ENCODE measurements at regions of chr3 and their contacts with region 1.

Region 1: DNA sequence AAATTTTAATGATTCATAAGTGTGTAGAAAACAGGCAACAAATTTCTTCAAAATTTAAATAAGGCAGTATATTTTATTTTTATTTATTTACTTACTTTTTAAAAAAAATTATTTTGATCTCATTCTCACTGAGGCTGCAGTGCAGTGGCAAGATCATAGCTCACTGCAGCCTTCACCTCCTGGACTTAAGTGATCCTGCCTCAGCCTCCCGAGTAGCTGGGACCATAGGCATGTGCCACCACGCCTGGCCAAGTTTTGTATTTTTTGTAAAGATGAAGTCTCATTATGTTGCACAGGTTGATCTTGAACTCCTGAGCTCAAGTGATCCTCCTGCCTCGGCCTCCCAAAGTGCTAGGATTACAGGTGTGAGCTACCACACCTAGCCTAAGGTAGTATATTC is 61.2 kb upstream of the XRN1 start:
- DNase-seq: no peak
- H3K4me3 Mint-ChIP-seq: peak overlapping the region; percentile 65
- H3K27ac Mint-ChIP-seq: peak overlapping the region; percentile 90
- H3K4me1 Mint-ChIP-seq: peaks cover 23% of the 10 kb centered on the region
- H3K27me3 Mint-ChIP-seq: no peaks in the 10 kb centered on the region

Region 2: DNA sequence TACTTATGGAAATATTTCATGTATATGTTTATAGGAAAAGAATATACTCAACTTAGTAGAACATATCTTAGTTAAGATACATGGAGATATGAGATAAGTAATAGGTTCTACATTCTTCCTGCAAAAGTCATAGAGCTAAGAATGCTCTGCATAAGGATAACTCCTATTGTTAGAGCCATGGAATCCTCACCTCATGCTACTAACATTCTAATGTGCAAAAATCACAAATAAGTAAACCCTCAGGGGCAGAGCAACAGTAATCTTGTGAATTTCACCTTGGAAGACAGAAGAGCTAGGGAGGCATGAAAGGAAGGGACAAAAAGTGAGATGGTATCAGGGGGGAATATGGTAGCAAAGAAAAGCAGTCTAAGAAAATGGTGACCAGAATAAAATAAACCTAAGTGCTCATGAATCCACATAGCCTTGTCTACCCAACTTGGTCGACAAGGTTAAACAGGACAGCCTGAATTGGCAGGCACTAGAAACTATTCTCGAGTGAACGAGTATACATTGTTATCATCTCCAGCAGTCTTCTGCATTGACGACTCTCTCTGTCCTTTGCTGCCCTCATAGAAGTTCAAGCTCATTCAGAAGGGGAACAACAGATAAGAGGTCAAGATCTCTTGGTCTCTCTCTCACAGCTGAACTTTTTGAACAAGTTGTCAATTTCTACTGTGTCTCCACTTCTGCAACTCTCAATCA is 114.0 kb before region 1 on chr3:
- CTCF ChIA-PET with region 1: no interaction called
- intact Hi-C with region 1: no loop called
- DNase-seq: no peak
- H3K4me3 Mint-ChIP-seq: no peak overlapping the region
- H3K27ac Mint-ChIP-seq: no peak overlapping the region
- H3K4me1 Mint-ChIP-seq: no peaks in the 10 kb centered on the region
- H3K27me3 Mint-ChIP-seq: no peaks in the 10 kb centered on the region

Region 3: GRCh38 chr3:142498397-142499180 is 10.5 kb before region 1 on chr3:
- CTCF ChIA-PET with region 1: interaction called, 4 read pairs
- intact Hi-C with region 1: loop called (anchors 1 kb)
- DNase-seq: no peak
- H3K4me3 Mint-ChIP-seq: peak overlapping the region; percentile 15
- H3K27ac Mint-ChIP-seq: peak overlapping the region; percentile 80
- H3K4me1 Mint-ChIP-seq: peaks cover 35% of the 10 kb centered on the region
- H3K27me3 Mint-ChIP-seq: no peaks in the 10 kb centered on the region

Region 4: DNA sequence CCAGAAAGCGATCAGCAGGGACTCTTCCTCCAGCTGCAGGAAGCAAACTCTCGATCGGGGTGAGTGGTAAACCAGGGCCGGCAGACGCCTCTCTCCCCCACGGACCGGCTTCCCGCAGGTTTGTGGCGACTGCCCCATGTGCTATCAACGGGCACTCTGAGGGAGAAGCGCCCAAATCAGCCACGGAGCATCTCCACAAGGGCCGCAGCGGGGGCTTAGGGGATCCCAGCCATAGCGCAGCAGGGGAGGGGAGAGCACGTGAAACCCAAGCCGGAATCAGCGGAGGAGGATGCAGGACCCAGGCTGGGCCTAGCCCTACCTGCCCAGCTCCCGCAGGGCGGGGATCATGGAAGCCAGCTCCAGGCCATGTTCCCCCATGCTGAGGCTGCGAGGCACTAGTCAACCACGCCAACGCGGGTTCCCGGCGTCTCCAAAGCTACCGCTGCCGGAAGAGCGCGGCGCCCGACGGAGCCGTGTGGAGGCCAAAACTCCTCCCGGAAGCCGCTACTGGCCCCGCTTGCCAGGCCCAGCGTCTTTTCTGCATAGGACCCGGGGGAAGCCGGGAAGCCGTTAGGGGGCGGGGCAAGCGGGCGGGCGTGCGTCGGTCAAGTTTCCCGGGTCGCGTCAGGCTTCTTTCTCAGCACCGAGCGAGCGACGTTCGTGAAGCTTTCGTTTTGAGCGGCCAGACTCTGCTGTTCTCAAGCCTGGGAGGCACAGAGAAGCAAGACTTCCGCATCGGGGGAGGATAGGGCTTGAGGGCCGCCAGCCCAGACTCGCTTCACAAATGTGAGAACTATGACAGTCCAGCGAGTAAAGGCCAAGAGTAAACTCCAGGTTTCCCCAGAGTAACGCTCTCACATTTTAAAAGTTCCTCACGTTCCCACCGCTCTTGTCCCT is 69.5 kb after region 1 on chr3 and contains the start of gene ATR:
- CTCF ChIA-PET with region 1: no interaction called
- intact Hi-C with region 1: no loop called
- DNase-seq: peak; percentile 98
- H3K4me3 Mint-ChIP-seq: peak within 1 kb of the TSS; percentile 94
- H3K27ac Mint-ChIP-seq: peak within 1 kb of the TSS; percentile 95
- H3K4me1 Mint-ChIP-seq: peaks cover 41% of the 10 kb centered on the region
- H3K27me3 Mint-ChIP-seq: no peaks in the 10 kb centered on the region
- total RNA-seq, gene ATR: 42.5 to 43.1 TPM